Activated naive CD4-positive, alpha-beta T cell treated with anti-CD3 and anti-CD28 coated beads, Interleukin-2, amount 10 ng/mL, durations not matched to agents 7 days and 5 days (primary cell): ENCODE measurements at regions of chr16 and their contacts with region 1.

Region 1: GRCh38 chr16:72098936-72099335 is 5.3 kb downstream of the DHX38 start:
- DNase-seq: no peak
- H3K4me3 Mint-ChIP-seq: no peak overlapping the region
- H3K27ac Mint-ChIP-seq: no peak overlapping the region
- H3K4me1 Mint-ChIP-seq: peaks cover 15% of the 10 kb centered on the region
- H3K27me3 Mint-ChIP-seq: no peaks in the 10 kb centered on the region

Region 2: GRCh38 chr16:71956486-71956885 is 142.4 kb before region 1 on chr16:
- CTCF ChIA-PET with region 1: no interaction called
- DNase-seq: no peak
- H3K4me3 Mint-ChIP-seq: no peak overlapping the region
- H3K27ac Mint-ChIP-seq: peak overlapping the region; percentile 11
- H3K4me1 Mint-ChIP-seq: peaks cover 43% of the 10 kb centered on the region
- H3K27me3 Mint-ChIP-seq: peaks cover 17% of the 10 kb centered on the region

Region 3: DNA sequence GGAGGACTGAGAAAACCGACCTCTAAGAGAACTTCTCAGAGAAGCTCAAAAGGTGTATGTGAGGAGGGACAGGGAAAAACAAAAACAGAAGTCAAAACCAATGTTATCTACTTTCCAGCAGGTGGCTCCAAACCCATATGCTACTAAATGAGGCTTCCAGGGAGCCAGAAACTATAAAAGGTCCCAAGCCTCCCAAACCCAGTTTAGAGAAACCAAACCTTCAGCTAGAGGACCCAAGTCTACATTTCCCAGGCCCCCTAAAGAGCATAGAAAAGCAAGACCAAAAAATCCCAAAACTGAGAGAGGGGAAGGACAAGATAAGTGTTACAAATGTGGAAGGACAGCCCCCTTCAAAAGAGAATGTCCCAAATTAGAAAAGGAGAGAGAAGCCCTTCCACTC is 32.2 kb before region 1 on chr16:
- CTCF ChIA-PET with region 1: interaction called, 13 read pairs
- DNase-seq: no peak
- H3K4me3 Mint-ChIP-seq: no peak overlapping the region
- H3K27ac Mint-ChIP-seq: no peak overlapping the region
- H3K4me1 Mint-ChIP-seq: no peaks in the 10 kb centered on the region
- H3K27me3 Mint-ChIP-seq: no peaks in the 10 kb centered on the region

Region 4: GRCh38 chr16:72083778-72084404 is 15.0 kb before region 1 on chr16:
- CTCF ChIA-PET with region 1: no interaction called
- DNase-seq: no peak
- H3K4me3 Mint-ChIP-seq: no peak overlapping the region
- H3K27ac Mint-ChIP-seq: no peak overlapping the region
- H3K4me1 Mint-ChIP-seq: no peaks in the 10 kb centered on the region
- H3K27me3 Mint-ChIP-seq: no peaks in the 10 kb centered on the region